ENCODE measurements at regions of chr15 and their contacts with region 1.

Region 1: GRCh38 chr15:68875377-68876116 is 54.8 kb upstream of the SPESP1 start:
- DNase-seq: peak; percentile 91 to 92
- ATAC-seq: peak; percentile 87 to 96
- H3K4me3 ChIP-seq: peak overlapping the region; percentile 17; the same call in 2 of the 3 replicates
- H3K27ac ChIP-seq: no peak overlapping the region
- H3K4me1 ChIP-seq: no peaks in the 10 kb centered on the region; the same call in 2 of the 3 replicates
- CTCF ChIP-seq: peak; percentile 99
- EP300 ChIP-seq: no peak
- POLR2A ChIP-seq: no peak
- RAD21 ChIP-seq: peak; percentile 98 to 99

Region 2: GRCh38 chr15:68252925-68253534 is 622.5 kb before region 1 on chr15:
- CTCF ChIA-PET with region 1: interaction called, 27 read pairs
- POLR2A ChIA-PET with region 1: no interaction called
- DNase-seq: peak; percentile 82 to 88
- ATAC-seq: peak; percentile 69 to 74
- H3K4me3 ChIP-seq: no peak overlapping the region
- H3K27ac ChIP-seq: no peak overlapping the region
- H3K4me1 ChIP-seq: peaks cover 12% of the 10 kb centered on the region; the same call in 2 of the 3 replicates
- CTCF ChIP-seq: peak; percentile 96
- EP300 ChIP-seq: no peak
- POLR2A ChIP-seq: no peak
- RAD21 ChIP-seq: peak; percentile 95 to 97

Region 3: GRCh38 chr15:68650901-68651709 is 224.4 kb before region 1 on chr15:
- CTCF ChIA-PET with region 1: interaction called, 11 read pairs
- POLR2A ChIA-PET with region 1: no interaction called
- DNase-seq: peak; percentile 78 to 90
- ATAC-seq: peak; percentile 93 to 99
- H3K4me3 ChIP-seq: no peak overlapping the region
- H3K27ac ChIP-seq: peak overlapping the region in 1 of 2 experiments; percentile 30; a peak in 2 of 6 replicates
- H3K4me1 ChIP-seq: no peaks in the 10 kb centered on the region
- CTCF ChIP-seq: peak; percentile 86
- EP300 ChIP-seq: no peak
- POLR2A ChIP-seq: no peak
- RAD21 ChIP-seq: peak; percentile 79

Region 4: GRCh38 chr15:68721886-68722285 is 153.7 kb before region 1 on chr15:
- CTCF ChIA-PET with region 1: interaction called, 39 read pairs
- POLR2A ChIA-PET with region 1: no interaction called
- DNase-seq: no peak
- ATAC-seq: no peak
- H3K4me3 ChIP-seq: no peak overlapping the region
- H3K27ac ChIP-seq: no peak overlapping the region
- H3K4me1 ChIP-seq: no peaks in the 10 kb centered on the region
- CTCF ChIP-seq: no peak
- EP300 ChIP-seq: no peak
- POLR2A ChIP-seq: no peak
- RAD21 ChIP-seq: no peak

Region 5: GRCh38 chr15:68764090-68764489 is 111.5 kb before region 1 on chr15:
- CTCF ChIA-PET with region 1: interaction called, 15 read pairs
- POLR2A ChIA-PET with region 1: no interaction called
- DNase-seq: no peak
- ATAC-seq: no peak
- H3K4me3 ChIP-seq: no peak overlapping the region
- H3K27ac ChIP-seq: no peak overlapping the region
- H3K4me1 ChIP-seq: peaks cover 8% of the 10 kb centered on the region
- CTCF ChIP-seq: no peak
- EP300 ChIP-seq: no peak
- POLR2A ChIP-seq: no peak
- RAD21 ChIP-seq: no peak

Region 6: DNA sequence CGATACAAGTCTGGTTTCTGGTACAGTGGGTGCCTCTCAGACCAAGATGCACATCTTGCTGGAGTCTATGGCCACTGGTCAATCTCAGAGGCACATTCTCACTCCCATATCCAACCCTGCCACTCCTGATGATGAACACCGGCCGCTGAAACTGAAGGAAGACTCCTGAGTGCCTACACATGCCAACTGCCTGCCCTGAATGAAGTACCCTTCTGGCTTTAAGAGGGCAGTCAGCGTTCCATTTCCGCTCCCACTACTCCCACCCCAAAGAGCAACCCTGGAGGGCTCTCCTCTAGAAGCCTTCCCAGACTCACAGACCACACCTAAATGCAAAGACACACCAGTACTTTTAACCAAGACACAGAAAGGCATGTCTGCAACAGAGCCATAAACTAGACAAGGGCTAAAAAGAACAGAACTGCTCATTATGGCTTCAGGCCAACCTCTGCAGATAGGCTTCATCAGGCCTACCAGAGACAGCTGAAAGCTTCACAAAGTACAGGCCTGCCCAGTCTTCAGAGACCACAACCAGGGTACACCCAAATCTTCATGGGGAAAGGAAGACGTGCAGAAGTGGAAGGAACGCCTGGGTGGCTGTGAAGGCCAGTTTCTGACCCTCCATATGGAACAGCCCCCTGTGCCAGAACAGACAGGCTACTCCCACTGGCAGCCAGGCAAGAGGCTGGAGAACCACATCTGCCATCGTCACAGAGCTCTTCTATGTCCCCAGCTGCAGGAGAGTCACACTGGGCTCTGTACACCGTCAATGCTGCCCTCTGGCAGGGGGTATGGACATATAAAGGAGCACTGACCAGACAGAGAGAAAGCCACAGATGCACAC is 69.1 kb before region 1 on chr15:
- CTCF ChIA-PET with region 1: interaction called, 10 read pairs
- POLR2A ChIA-PET with region 1: no interaction called
- DNase-seq: no peak
- ATAC-seq: peak; percentile 40 to 42; a peak in 3 of 6 replicates
- H3K4me3 ChIP-seq: no peak overlapping the region
- H3K27ac ChIP-seq: no peak overlapping the region
- H3K4me1 ChIP-seq: 0 out of 3 replicates have a peak, but pooled peaks cover 6% of the 10 kb centered on the region
- CTCF ChIP-seq: no peak
- EP300 ChIP-seq: no peak
- POLR2A ChIP-seq: no peak
- RAD21 ChIP-seq: no peak

Region 7: GRCh38 chr15:68894208-68894607 is 18.7 kb after region 1 on chr15:
- CTCF ChIA-PET with region 1: interaction called, 57 read pairs
- POLR2A ChIA-PET with region 1: no interaction called
- DNase-seq: no peak
- ATAC-seq: 0 out of 6 replicates have a peak, but pooled peaks of 1 of the 2 experiments have one; percentile 30
- H3K4me3 ChIP-seq: no peak overlapping the region
- H3K27ac ChIP-seq: no peak overlapping the region
- H3K4me1 ChIP-seq: no peaks in the 10 kb centered on the region
- CTCF ChIP-seq: no peak
- EP300 ChIP-seq: no peak
- POLR2A ChIP-seq: no peak
- RAD21 ChIP-seq: no peak